H1 (cell line): ENCODE measurements at regions of chr3 and their contacts with region 1.

Region 1: GRCh38 chr3:52197842-52198668 is at the start of gene ALAS1:
- DNase-seq: peak; percentile 87 to 98
- H3K4me3 ChIP-seq: peak within 1 kb of the TSS; percentile 80 to 94 (median 85)
- H3K27ac ChIP-seq: peak within 1 kb of the TSS; percentile 41; the same call in 1 of the 2 replicates
- H3K4me1 ChIP-seq: peaks cover 0 to 12% (median 7%) of the 10 kb centered on the region in 4 experiments; a peak in 6 of 7 replicates
- H3K27me3 ChIP-seq: peaks cover 0 to 3% (median under 1%) of the 10 kb centered on the region in 4 experiments; a peak in 4 of 7 replicates
- CTCF ChIP-seq: peak in 2 of 3 experiments; percentile 6 to 14; a peak in 2 of 4 replicates
- EP300 ChIP-seq: no peak
- POLR2A ChIP-seq: peak in 1 of 2 experiments; percentile 85; a peak in 2 of 3 replicates
- RAD21 ChIP-seq: peak in 1 of 2 experiments; percentile 27; a peak in 2 of 4 replicates
- total RNA-seq, gene ALAS1: 45.2 and 45.9 TPM in 2 replicates

Region 2: GRCh38 chr3:52154117-52155094 is 43.6 kb before region 1 on chr3 and contains the start of gene POC1A:
- CTCF ChIA-PET with region 1: interaction called, 4 read pairs
- POLR2A ChIA-PET with region 1: interaction called, 14 read pairs
- DNase-seq: peak; percentile 80 to 96
- H3K4me3 ChIP-seq: peak within 1 kb of the TSS; percentile 79 to 90 (median 86)
- H3K27ac ChIP-seq: peak within 1 kb of the TSS; percentile 58; the same call in 1 of the 2 replicates
- H3K4me1 ChIP-seq: peaks cover 2 to 6% (median 4%) of the 10 kb centered on the region in 4 experiments; a peak in 4 of 7 replicates
- H3K27me3 ChIP-seq: no peaks in the 10 kb centered on the region
- CTCF ChIP-seq: no peak
- EP300 ChIP-seq: no peak
- POLR2A ChIP-seq: peak in 1 of 2 experiments; percentile 62; a peak in 2 of 3 replicates
- RAD21 ChIP-seq: no peak
- total RNA-seq, gene POC1A: 35.7 and 39.2 TPM in 2 replicates

Region 3: DNA sequence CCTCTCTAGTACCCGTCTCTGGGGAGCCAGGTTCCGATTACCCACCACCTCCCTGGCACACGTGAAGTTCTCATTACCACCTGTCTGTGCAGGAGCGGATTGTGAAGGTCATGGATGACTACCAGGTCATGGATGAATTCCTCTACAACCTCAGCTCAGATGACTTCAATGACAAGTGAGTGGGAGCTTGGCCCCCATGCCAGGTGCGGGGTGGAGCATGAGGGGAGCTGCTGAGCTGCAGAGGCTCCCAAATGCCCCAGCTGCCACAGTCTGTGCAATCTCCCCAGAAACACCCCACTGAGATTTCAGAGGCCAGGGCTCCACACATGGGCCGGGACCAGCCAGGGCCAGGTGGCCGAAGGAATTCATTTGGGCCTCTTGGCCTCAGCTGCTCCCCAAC is 152.4 kb after region 1 on chr3:
- CTCF ChIA-PET with region 1: no interaction called
- POLR2A ChIA-PET with region 1: no interaction called
- DNase-seq: no peak
- H3K4me3 ChIP-seq: no peak overlapping the region
- H3K27ac ChIP-seq: no peak overlapping the region
- H3K4me1 ChIP-seq: no peaks in the 10 kb centered on the region
- H3K27me3 ChIP-seq: no peaks in the 10 kb centered on the region
- CTCF ChIP-seq: no peak
- EP300 ChIP-seq: no peak
- POLR2A ChIP-seq: no peak
- RAD21 ChIP-seq: no peak